ENCODE measurements at regions of chr9 and their contacts with region 1.

Region 1: GRCh38 chr9:6055213-6055612 is 39.8 kb upstream of the RANBP6 start:
- DNase-seq: peak; percentile 49 to 91
- ATAC-seq: peak; percentile 91 to 92
- H3K4me3 ChIP-seq: no peak overlapping the region
- H3K27ac ChIP-seq: no peak overlapping the region
- H3K4me1 ChIP-seq: no peaks in the 10 kb centered on the region
- CTCF ChIP-seq: peak; percentile 86
- EP300 ChIP-seq: no peak
- POLR2A ChIP-seq: no peak
- RAD21 ChIP-seq: peak; percentile 93 to 94

Region 2: GRCh38 chr9:5671711-5672353 is 383.4 kb before region 1 on chr9:
- CTCF ChIA-PET with region 1: no interaction called
- POLR2A ChIA-PET with region 1: no interaction called
- DNase-seq: no peak
- ATAC-seq: no peak
- H3K4me3 ChIP-seq: no peak overlapping the region
- H3K27ac ChIP-seq: no peak overlapping the region
- H3K4me1 ChIP-seq: no peaks in the 10 kb centered on the region
- CTCF ChIP-seq: no peak
- EP300 ChIP-seq: no peak
- POLR2A ChIP-seq: no peak
- RAD21 ChIP-seq: no peak

Region 3: DNA sequence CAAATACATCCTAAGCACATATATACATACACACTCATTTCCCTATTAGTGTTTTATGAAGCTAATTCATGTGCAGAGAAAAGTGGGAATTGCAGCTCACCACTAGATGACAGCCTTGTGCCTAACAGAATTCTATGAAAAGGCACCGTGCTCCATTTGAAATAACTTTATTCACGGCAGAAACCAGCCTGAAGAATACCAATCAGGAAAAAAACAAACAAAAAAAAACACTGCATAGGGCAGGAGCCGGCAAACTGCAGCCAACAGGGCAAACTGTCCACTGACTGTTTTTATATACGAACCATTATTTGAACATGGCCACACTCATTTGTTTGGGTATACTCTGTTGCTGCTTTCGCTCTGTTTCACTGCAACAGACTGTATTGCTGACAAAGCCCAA is 255.9 kb before region 1 on chr9:
- CTCF ChIA-PET with region 1: interaction called, 12 read pairs
- POLR2A ChIA-PET with region 1: no interaction called
- DNase-seq: peak; percentile 41 to 73
- ATAC-seq: peak; percentile 74 to 87
- H3K4me3 ChIP-seq: no peak overlapping the region
- H3K27ac ChIP-seq: peak overlapping the region; percentile 8 to 38; a peak in 2 of 6 replicates
- H3K4me1 ChIP-seq: peaks cover 21% of the 10 kb centered on the region
- CTCF ChIP-seq: peak; percentile 97
- EP300 ChIP-seq: no peak
- POLR2A ChIP-seq: no peak
- RAD21 ChIP-seq: peak; percentile 91 to 94

Region 4: DNA sequence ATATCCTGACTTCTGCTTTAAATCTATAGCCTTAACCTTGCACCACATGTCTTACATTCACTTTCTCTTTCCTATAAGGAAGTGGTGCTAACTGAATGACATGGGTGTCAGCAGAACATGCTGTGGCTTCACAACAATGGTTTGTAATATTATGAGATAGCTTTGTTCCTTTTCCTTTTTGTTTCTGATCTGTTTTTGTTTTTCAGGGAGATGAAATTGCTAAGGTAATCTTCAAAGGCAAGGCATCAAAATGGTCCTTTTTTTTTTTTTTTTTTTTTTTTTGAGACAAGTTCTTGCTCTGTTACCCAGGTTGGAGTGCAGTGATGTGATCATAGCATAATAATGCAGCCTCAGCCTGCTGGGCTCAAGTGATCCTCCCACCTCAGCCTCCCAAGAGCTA is 13.8 kb after region 1 on chr9:
- CTCF ChIA-PET with region 1: interaction called, 20 read pairs
- POLR2A ChIA-PET with region 1: no interaction called
- DNase-seq: no peak
- ATAC-seq: no peak
- H3K4me3 ChIP-seq: no peak overlapping the region
- H3K27ac ChIP-seq: no peak overlapping the region
- H3K4me1 ChIP-seq: no peaks in the 10 kb centered on the region
- CTCF ChIP-seq: no peak
- EP300 ChIP-seq: no peak
- POLR2A ChIP-seq: no peak
- RAD21 ChIP-seq: no peak

Region 5: DNA sequence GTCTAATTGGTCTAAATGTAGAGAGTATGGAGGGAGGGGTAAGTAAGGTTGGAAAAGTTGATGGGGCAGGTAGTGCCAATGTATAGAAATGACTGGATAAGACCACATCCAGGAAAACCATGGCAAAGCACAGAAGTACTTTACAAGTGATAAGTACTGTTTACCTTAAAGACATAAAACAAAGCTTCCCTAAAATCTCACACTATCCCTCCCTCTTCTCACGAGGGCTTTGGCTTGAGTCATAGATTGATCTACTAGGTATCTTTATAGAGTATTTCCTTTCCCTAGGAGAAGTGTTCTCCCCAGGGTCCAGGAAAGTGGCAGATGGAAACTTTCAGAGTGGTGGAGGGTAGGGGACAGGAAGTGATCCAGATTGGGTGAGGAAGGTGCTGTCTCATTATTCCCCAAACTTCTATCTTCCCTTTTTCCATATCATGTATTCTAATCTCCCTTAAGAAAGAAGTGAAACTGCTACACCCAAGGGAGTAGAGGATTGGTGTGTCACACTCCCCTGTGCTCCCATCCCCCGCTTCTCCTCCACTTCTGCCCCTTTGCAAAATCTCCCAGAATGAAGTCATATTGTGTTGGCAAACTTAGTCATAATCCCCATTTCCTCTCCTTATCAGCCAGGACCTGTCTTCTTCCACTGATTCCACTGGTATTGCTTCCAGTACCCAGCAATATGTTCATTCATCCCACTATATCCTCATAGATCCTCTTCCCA is 175.0 kb after region 1 on chr9:
- CTCF ChIA-PET with region 1: no interaction called
- POLR2A ChIA-PET with region 1: no interaction called
- DNase-seq: no peak
- ATAC-seq: no peak
- H3K4me3 ChIP-seq: no peak overlapping the region
- H3K27ac ChIP-seq: no peak overlapping the region; a peak in 1 of 6 replicates
- H3K4me1 ChIP-seq: peaks cover 7% of the 10 kb centered on the region; the same call in 1 of the 3 replicates
- CTCF ChIP-seq: no peak
- EP300 ChIP-seq: no peak
- POLR2A ChIP-seq: no peak
- RAD21 ChIP-seq: no peak

Measured in A549 (cell line).